ENCODE measurements at regions of chr17 and their contacts with region 1.

Region 1: GRCh38 chr17:7252176-7253043 is at the start of gene ELP5:
- DNase-seq: peak; percentile 89 to 93
- ATAC-seq: peak; percentile 62 to 80 (median 64)
- H3K4me3 ChIP-seq: peak within 1 kb of the TSS; percentile 67
- H3K4me3 Mint-ChIP-seq: peak within 1 kb of the TSS; percentile 92
- H3K27ac ChIP-seq: peak within 1 kb of the TSS; percentile 96
- H3K27ac Mint-ChIP-seq: peak within 1 kb of the TSS; percentile 93 to 98
- H3K4me1 ChIP-seq: peaks cover 32% of the 10 kb centered on the region
- H3K4me1 Mint-ChIP-seq: peaks cover 41 to 43% of the 10 kb centered on the region in 2 donors
- H3K27me3 ChIP-seq: no peaks in the 10 kb centered on the region
- H3K27me3 Mint-ChIP-seq: no peaks in the 10 kb centered on the region
- CTCF ChIP-seq: no peak
- total RNA-seq, gene ELP5: 30.1 to 38.5 (median 30.3) TPM

Region 2: DNA sequence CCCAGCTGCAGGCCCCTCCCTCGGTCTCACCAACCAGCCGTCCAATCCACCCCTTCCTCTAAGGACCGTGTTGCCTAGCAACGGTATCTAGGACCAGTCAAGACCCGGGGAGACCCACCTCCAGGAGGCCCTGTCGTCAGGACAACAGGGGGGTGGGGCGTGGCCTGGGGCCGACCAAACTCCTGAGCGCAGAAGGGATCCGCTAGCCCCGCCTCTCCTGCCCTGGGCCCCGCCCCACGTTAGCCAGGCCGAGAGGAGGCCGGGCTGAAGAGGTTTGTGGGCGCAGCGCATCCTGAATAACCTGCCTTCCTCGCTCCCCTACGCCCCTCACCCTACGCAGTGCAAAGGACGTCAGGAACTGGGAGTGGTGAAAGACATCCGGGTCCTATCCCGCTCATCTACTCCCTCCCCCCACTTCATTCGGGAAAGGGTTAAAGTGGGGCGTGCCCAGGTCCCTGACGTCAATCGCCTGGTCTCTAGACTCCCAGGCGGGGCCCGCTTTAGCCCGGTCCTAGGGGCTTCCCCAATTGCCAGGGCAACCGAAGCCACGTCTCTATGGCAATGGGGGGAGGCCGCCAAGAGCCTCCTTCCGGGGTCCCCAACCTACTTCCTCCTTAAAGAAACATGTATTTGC is 47.5 kb before region 1 on chr17:
- intact Hi-C with region 1: loop called (anchors 2 kb)
- DNase-seq: peak; percentile 93 to 99
- ATAC-seq: peak; percentile 79 to 91 (median 80)
- H3K4me3 ChIP-seq: peak overlapping the region; percentile 57
- H3K4me3 Mint-ChIP-seq: peak overlapping the region; percentile 93
- H3K27ac ChIP-seq: peak overlapping the region; percentile 96
- H3K27ac Mint-ChIP-seq: peak overlapping the region; percentile 93 to 95
- H3K4me1 ChIP-seq: peaks cover 24% of the 10 kb centered on the region
- H3K4me1 Mint-ChIP-seq: peaks cover 27 to 34% of the 10 kb centered on the region in 2 donors
- H3K27me3 ChIP-seq: no peaks in the 10 kb centered on the region
- H3K27me3 Mint-ChIP-seq: no peaks in the 10 kb centered on the region
- CTCF ChIP-seq: no peak

Region 3: GRCh38 chr17:7214300-7215135 is 37.9 kb before region 1 on chr17:
- intact Hi-C with region 1: loop called (anchors 5 kb)
- DNase-seq: peak; percentile 97 to 98
- ATAC-seq: peak; percentile 86 to 97 (median 87)
- H3K4me3 ChIP-seq: peak overlapping the region; percentile 34
- H3K4me3 Mint-ChIP-seq: peak overlapping the region; percentile 89
- H3K27ac ChIP-seq: peak overlapping the region; percentile 67
- H3K27ac Mint-ChIP-seq: peak overlapping the region; percentile 87 to 99
- H3K4me1 ChIP-seq: peaks cover 41% of the 10 kb centered on the region
- H3K4me1 Mint-ChIP-seq: peaks cover 18 to 48% of the 10 kb centered on the region in 2 donors
- H3K27me3 ChIP-seq: no peaks in the 10 kb centered on the region
- H3K27me3 Mint-ChIP-seq: peaks cover 7 to 16% of the 10 kb centered on the region in 2 donors
- CTCF ChIP-seq: peak; percentile 18

Region 4: DNA sequence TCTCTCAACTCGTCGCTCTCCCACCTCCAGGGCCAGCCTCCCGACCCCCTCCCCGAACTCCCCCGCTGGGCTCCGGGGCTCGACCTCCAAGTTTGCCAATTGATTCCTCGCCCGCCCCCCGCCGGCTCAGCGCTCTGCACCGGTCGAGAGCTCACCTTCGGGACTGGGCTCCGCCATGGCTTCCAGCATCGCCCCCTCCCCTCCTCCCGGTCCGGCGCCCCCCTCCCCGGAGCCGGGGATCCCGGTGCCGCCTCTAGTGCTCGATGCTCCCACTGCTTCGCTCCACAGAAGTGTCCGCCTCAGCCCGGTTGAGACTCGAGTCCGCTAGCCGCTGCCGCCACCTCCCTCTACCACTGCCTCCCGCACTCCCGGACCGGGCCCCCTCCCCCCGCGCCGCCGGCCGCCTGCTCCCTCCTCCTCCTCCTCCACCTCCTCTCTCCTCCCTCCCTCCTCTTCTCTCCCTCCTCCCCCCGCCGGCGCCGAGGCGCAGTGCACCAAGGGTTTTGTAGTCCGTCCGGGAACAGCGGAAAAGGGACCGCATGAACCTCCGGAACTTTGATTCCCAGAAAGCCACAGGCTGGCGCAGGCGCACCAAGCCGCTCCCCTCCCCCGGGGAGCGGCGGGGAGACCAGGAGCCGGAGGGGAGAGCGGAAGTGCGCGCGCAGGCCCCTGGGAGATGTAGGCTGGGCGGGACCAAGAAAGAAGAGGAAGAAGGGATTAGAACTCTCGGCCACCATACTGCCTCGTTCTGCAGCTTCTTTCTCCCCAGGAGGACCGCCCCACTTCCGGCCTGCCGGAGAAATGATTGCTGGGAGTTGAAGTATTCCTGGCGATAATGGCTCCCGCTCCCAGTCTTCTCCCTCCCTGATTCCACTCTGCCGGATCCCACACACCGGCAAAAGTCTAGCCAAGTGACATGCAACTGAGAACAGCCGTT is 13.1 kb before region 1 on chr17 and contains the start of gene PHF23:
- intact Hi-C with region 1: loop called (anchors 1 kb)
- DNase-seq: peak; percentile 85 to 99
- ATAC-seq: peak; percentile 56 to 77 (median 68)
- H3K4me3 ChIP-seq: peak within 1 kb of the TSS; percentile 87
- H3K4me3 Mint-ChIP-seq: peak within 1 kb of the TSS; percentile 96
- H3K27ac ChIP-seq: peak within 1 kb of the TSS; percentile 80
- H3K27ac Mint-ChIP-seq: peak within 1 kb of the TSS; percentile 97 to 99
- H3K4me1 ChIP-seq: peaks cover 53% of the 10 kb centered on the region
- H3K4me1 Mint-ChIP-seq: peaks cover 61 to 77% of the 10 kb centered on the region in 2 donors
- H3K27me3 ChIP-seq: no peaks in the 10 kb centered on the region
- H3K27me3 Mint-ChIP-seq: no peaks in the 10 kb centered on the region
- CTCF ChIP-seq: no peak
- total RNA-seq, gene PHF23: 19.3 to 32.3 (median 20.8) TPM

Region 5: DNA sequence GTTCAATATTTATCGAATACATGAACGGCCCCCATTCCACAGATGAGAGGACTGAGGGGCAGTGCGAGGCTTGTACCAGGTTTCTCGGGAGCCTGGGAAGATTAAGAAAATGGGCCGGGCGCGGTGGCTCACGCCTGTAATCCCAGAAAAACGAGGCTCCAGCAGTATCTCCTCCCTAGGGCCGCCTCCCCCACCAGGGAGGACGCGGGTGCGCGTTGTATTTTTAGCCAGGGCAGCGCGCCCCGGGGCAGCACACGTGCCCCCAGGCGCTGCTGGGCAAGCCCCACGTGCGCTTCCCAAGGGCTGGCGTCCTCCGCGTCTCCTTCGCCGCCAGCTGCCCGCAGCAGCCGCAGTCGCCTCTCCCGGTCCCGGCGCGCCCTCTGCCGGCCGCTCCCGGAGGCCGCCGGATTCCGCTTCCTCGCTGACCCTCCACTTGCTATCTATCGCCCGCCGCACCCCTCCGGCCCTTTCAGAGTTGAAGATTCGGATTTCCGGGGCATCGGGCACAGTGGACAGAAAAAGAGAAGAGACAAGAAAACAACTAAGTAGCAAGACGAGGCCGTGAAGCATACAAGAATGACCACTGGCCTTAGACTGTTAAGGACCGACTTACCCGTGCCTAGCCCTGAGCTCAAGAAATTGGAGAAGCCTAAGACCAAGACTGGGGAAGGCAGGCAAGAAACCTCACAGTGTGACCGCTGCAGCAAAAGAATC is 43.9 kb after region 1 on chr17:
- intact Hi-C with region 1: no loop called
- DNase-seq: peak; percentile 71 to 83
- ATAC-seq: peak; percentile 46 to 63 (median 49)
- H3K4me3 ChIP-seq: no peak overlapping the region
- H3K4me3 Mint-ChIP-seq: peak overlapping the region; percentile 95
- H3K27ac ChIP-seq: no peak overlapping the region
- H3K27ac Mint-ChIP-seq: no peak overlapping the region
- H3K4me1 ChIP-seq: peaks cover 28% of the 10 kb centered on the region
- H3K4me1 Mint-ChIP-seq: peaks cover 19 to 24% of the 10 kb centered on the region in 2 donors
- H3K27me3 ChIP-seq: peaks cover 18% of the 10 kb centered on the region
- H3K27me3 Mint-ChIP-seq: peaks cover 7 to 17% of the 10 kb centered on the region in 2 donors
- CTCF ChIP-seq: peak; percentile 92

Region 6: GRCh38 chr17:7484067-7484918 is 231.9 kb after region 1 on chr17 and contains the start of gene POLR2A:
- intact Hi-C with region 1: loop called (anchors 5 kb)
- DNase-seq: peak; percentile 99
- ATAC-seq: peak; percentile 63 to 83 (median 66)
- H3K4me3 ChIP-seq: peak within 1 kb of the TSS; percentile 81
- H3K4me3 Mint-ChIP-seq: peak within 1 kb of the TSS; percentile 100
- H3K27ac ChIP-seq: peak within 1 kb of the TSS; percentile 96
- H3K27ac Mint-ChIP-seq: peak within 1 kb of the TSS; percentile 100
- H3K4me1 ChIP-seq: peaks cover 50% of the 10 kb centered on the region
- H3K4me1 Mint-ChIP-seq: peaks cover 72 to 84% of the 10 kb centered on the region in 2 donors
- H3K27me3 ChIP-seq: no peaks in the 10 kb centered on the region
- H3K27me3 Mint-ChIP-seq: no peaks in the 10 kb centered on the region
- CTCF ChIP-seq: no peak
- total RNA-seq, gene POLR2A: 515 to 879 (median 524) TPM